Activated naive CD8-positive, alpha-beta T cell treated with anti-CD3 and anti-CD28 coated beads, Interleukin-2, amount 10 ng/mL, durations not matched to agents 7 days and 5 days (primary cell): ENCODE measurements at regions of chr6 and their contacts with region 1.

Region 1: GRCh38 chr6:142946181-142946923 is 1.4 kb upstream of the HIVEP2 start:
- DNase-seq: peak; percentile 82
- ATAC-seq: peak; percentile 21
- H3K4me3 Mint-ChIP-seq: peak overlapping the region; percentile 94
- H3K27ac Mint-ChIP-seq: peak overlapping the region; percentile 96
- H3K4me1 Mint-ChIP-seq: peaks cover 32% of the 10 kb centered on the region
- H3K27me3 Mint-ChIP-seq: no peaks in the 10 kb centered on the region

Region 2: GRCh38 chr6:142845624-142846458 is 100.5 kb before region 1 on chr6:
- POLR2A ChIA-PET with region 1: interaction called, 13 read pairs
- DNase-seq: peak; percentile 64
- ATAC-seq: peak; percentile 65
- H3K4me3 Mint-ChIP-seq: peak overlapping the region; percentile 80
- H3K27ac Mint-ChIP-seq: peak overlapping the region; percentile 87
- H3K4me1 Mint-ChIP-seq: peaks cover 75% of the 10 kb centered on the region
- H3K27me3 Mint-ChIP-seq: no peaks in the 10 kb centered on the region

Region 3: DNA sequence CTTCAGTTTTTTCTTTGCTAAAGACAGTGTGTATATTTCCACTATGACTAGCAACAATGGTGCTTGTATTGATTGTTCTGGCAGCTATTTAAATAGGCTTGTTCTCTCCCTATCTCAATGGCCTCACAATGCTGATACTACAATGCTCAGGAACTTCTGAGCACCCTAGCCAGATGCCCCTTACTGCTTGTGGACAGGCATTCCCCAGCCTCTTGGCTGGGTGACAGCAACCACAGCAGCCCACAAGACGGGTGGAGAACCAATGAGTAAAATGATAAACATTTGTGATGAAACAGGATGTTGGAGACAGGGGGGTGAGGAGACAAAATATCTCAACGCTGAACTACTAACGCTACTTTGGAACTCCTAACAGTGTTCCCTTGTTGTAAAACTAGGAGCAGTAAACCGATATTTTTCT is 43.7 kb before region 1 on chr6:
- POLR2A ChIA-PET with region 1: interaction called, 12 read pairs
- DNase-seq: peak; percentile 79
- ATAC-seq: peak; percentile 73
- H3K4me3 Mint-ChIP-seq: peak overlapping the region; percentile 76
- H3K27ac Mint-ChIP-seq: peak overlapping the region; percentile 89
- H3K4me1 Mint-ChIP-seq: peaks cover 57% of the 10 kb centered on the region
- H3K27me3 Mint-ChIP-seq: no peaks in the 10 kb centered on the region

Region 4: DNA sequence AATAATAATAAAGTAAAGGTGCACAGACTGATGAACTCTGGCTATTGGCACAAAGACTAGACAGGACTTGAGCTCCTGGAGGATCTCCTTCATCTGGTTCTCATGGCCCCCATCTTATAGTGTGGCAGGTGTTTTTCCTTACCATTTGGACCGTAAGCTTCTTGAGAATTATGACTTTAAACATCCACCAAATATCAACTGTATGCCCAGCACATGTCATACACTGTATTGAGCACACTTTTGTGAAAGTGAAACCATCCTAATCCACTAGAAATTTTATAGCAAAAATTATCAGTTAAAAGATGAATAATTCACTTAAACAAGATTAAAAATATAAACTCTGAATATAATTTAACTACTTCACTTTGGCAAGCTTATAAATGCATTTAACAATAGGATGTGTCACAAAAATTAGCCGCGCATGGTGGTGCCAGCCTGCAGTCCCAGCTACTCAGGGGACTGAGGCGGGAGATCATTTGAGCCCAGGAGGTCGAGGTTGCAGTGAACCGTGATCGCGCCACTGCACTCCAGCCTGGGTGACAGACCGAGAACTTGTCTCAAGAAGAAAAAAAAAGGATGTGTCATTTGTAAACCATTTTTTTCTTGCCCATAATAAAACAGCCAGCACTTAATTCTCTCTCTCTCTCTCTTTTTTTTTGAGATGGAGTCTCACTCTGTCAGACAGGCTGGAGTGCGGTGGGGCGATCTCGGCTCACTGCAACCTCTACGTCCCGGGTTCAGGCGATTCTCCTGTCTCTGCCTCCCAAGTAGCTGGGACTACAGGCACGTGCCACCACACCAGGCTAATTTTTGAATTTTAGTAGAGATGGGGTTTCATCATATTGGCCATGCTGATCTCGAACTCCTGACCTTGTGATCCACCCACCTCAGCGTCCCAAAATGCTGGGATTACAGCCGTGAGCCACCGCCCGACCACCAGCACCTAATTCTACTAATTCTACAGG is 10.5 kb before region 1 on chr6:
- POLR2A ChIA-PET with region 1: interaction called, 15 read pairs
- DNase-seq: no peak
- ATAC-seq: peak; percentile 44
- H3K4me3 Mint-ChIP-seq: peak overlapping the region; percentile 80
- H3K27ac Mint-ChIP-seq: peak overlapping the region; percentile 87
- H3K4me1 Mint-ChIP-seq: peaks cover 67% of the 10 kb centered on the region
- H3K27me3 Mint-ChIP-seq: no peaks in the 10 kb centered on the region